ENCODE measurements at regions of chr7 and their contacts with region 1.

Region 1: GRCh38 chr7:32942786-32943653 is 14.2 kb upstream of the FKBP9 start:
- DNase-seq: peak; percentile 82
- ATAC-seq: peak; percentile 91
- H3K4me3 Mint-ChIP-seq: peak overlapping the region; percentile 30; the same call in 1 of the 2 replicates
- H3K27ac Mint-ChIP-seq: no peak overlapping the region
- H3K4me1 Mint-ChIP-seq: peaks cover 14% of the 10 kb centered on the region
- H3K27me3 Mint-ChIP-seq: peaks cover 97% of the 10 kb centered on the region
- CTCF ChIP-seq: no peak

Region 2: GRCh38 chr7:32803406-32804141 is 139.4 kb before region 1 on chr7:
- CTCF ChIA-PET with region 1: interaction called, 11 read pairs
- POLR2A ChIA-PET with region 1: interaction called, 3 read pairs
- DNase-seq: no peak
- ATAC-seq: no peak
- H3K4me3 Mint-ChIP-seq: no peak overlapping the region
- H3K27ac Mint-ChIP-seq: no peak overlapping the region
- H3K4me1 Mint-ChIP-seq: no peaks in the 10 kb centered on the region
- H3K27me3 Mint-ChIP-seq: peaks cover 34% of the 10 kb centered on the region
- CTCF ChIP-seq: no peak

Region 3: DNA sequence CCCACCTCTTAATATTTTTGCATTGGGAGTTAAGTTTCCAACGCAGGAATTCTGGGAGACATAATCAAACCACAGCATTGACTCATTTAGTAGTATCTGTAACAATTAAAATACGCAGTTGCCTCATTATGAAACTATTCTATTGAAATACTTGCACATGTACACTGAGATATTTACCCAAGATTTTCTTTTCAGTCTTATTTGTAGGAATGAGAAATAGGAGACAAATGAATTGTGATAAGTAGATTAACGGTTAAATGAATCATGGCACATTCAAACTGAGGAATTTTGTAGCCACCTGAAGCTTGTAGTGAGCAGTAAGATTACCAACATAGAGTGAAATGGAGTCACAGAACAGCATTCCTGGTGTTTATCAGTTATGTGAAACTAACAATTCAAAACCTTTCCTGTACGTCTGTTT is 148.1 kb after region 1 on chr7:
- CTCF ChIA-PET with region 1: no interaction called
- POLR2A ChIA-PET with region 1: no interaction called
- DNase-seq: no peak
- ATAC-seq: no peak
- H3K4me3 Mint-ChIP-seq: no peak overlapping the region
- H3K27ac Mint-ChIP-seq: no peak overlapping the region
- H3K4me1 Mint-ChIP-seq: no peaks in the 10 kb centered on the region
- H3K27me3 Mint-ChIP-seq: no peaks in the 10 kb centered on the region
- CTCF ChIP-seq: no peak